Activated CD4-positive, alpha-beta memory T cell treated with anti-CD3 and anti-CD28 coated beads for 36 hours (primary cell): ENCODE measurements at regions of chr2 and their contacts with region 1.

Region 1: GRCh38 chr2:9753276-9753600 is 90.0 kb upstream of the TAF1B start:
- DNase-seq: peak; percentile 90
- H3K4me3 Mint-ChIP-seq: peak overlapping the region; percentile 68
- H3K27ac Mint-ChIP-seq: peak overlapping the region; percentile 91
- H3K4me1 Mint-ChIP-seq: peaks cover 70% of the 10 kb centered on the region
- H3K27me3 Mint-ChIP-seq: no peaks in the 10 kb centered on the region

Region 2: DNA sequence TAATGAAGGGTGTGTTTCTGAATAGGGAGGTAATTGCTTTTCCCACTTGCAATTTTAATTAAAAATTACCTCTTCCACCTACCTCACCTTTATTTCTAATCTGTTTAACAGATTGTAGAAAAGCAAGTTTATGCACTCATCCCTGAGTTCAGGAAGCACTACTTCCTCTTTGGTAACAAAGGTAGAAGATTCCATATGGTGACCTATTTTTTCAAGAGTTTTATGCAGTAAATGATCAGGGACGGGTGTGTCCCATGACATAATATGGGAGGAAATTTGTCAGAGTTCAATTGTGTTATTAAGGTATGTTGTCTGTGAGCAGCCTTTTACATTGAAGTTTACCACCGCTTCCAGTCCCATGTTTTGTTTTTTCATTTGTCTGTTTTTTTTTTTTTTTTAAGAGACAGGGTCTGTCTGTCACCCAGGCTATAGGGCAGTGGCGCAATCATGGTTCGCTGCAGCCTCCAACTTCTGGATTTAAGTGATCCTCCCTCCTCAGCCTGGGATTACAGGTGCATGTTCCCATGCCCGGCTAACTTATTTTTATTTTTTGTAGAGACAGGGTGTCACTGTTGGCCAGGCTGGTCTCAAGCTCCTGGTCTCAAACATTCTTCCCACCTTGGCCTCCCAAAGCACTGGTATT is 478.4 kb before region 1 on chr2:
- CTCF ChIA-PET with region 1: no interaction called
- POLR2A ChIA-PET with region 1: no interaction called
- intact Hi-C with region 1: no loop called
- DNase-seq: no peak
- H3K4me3 Mint-ChIP-seq: no peak overlapping the region
- H3K27ac Mint-ChIP-seq: no peak overlapping the region
- H3K4me1 Mint-ChIP-seq: no peaks in the 10 kb centered on the region
- H3K27me3 Mint-ChIP-seq: peaks cover 14% of the 10 kb centered on the region

Region 3: GRCh38 chr2:9423100-9423921 is 329.9 kb before region 1 on chr2 and contains the starts of genes CPSF3 and ITGB1BP1:
- CTCF ChIA-PET with region 1: no interaction called
- POLR2A ChIA-PET with region 1: no interaction called
- intact Hi-C with region 1: loop called (anchors 10 kb)
- DNase-seq: peak; percentile 98
- H3K4me3 Mint-ChIP-seq: peak within 1 kb of the TSS; percentile 87
- H3K27ac Mint-ChIP-seq: peak within 1 kb of the TSS; percentile 88
- H3K4me1 Mint-ChIP-seq: peaks cover 35% of the 10 kb centered on the region
- H3K27me3 Mint-ChIP-seq: no peaks in the 10 kb centered on the region
- total RNA-seq, gene CPSF3: 77.5 to 78.1 TPM
- total RNA-seq, gene ITGB1BP1: 136 to 142 TPM

Region 4: DNA sequence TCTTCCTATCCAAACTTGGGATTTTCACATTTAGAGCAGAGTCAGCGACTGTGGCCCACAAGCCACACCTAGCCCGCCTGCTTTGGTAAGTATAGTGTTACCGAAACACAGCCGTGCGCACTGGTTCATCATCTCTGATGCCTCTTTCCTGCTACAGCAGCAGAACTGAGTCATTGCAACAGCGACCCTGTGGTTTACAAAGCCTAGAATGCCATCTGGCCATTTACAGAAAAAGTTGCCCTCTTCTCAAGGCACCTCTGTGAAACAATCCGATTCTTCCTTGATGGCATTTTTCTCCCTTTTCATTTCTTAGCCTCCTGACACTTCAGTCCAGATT is 289.6 kb before region 1 on chr2:
- CTCF ChIA-PET with region 1: no interaction called
- POLR2A ChIA-PET with region 1: no interaction called
- intact Hi-C with region 1: no loop called
- DNase-seq: peak; percentile 50
- H3K4me3 Mint-ChIP-seq: no peak overlapping the region
- H3K27ac Mint-ChIP-seq: peak overlapping the region; percentile 67
- H3K4me1 Mint-ChIP-seq: peaks cover 11% of the 10 kb centered on the region
- H3K27me3 Mint-ChIP-seq: no peaks in the 10 kb centered on the region

Region 5: GRCh38 chr2:9555297-9556141 is 197.7 kb before region 1 on chr2 and contains the start of gene ADAM17:
- CTCF ChIA-PET with region 1: no interaction called
- POLR2A ChIA-PET with region 1: interaction called, 8 read pairs
- intact Hi-C with region 1: loop called (anchors 1 kb)
- DNase-seq: peak; percentile 93
- H3K4me3 Mint-ChIP-seq: peak within 1 kb of the TSS; percentile 100
- H3K27ac Mint-ChIP-seq: peak within 1 kb of the TSS; percentile 98
- H3K4me1 Mint-ChIP-seq: peaks cover 50% of the 10 kb centered on the region
- H3K27me3 Mint-ChIP-seq: no peaks in the 10 kb centered on the region
- total RNA-seq, gene ADAM17: 24.0 to 24.7 TPM

Region 6: GRCh38 chr2:9656270-9656766 is 96.9 kb before region 1 on chr2:
- CTCF ChIA-PET with region 1: interaction called, 3 read pairs
- POLR2A ChIA-PET with region 1: interaction called, 18 read pairs
- intact Hi-C with region 1: loop called (anchors 1 kb)
- DNase-seq: peak; percentile 90
- H3K4me3 Mint-ChIP-seq: peak overlapping the region; percentile 40
- H3K27ac Mint-ChIP-seq: peak overlapping the region; percentile 94
- H3K4me1 Mint-ChIP-seq: peaks cover 43% of the 10 kb centered on the region
- H3K27me3 Mint-ChIP-seq: peaks cover 9% of the 10 kb centered on the region

Region 7: GRCh38 chr2:9739531-9739964 is 13.7 kb before region 1 on chr2:
- CTCF ChIA-PET with region 1: interaction called, 5 read pairs
- POLR2A ChIA-PET with region 1: interaction called, 12 read pairs
- intact Hi-C with region 1: loop called (anchors 1 kb)
- DNase-seq: peak; percentile 77
- H3K4me3 Mint-ChIP-seq: peak overlapping the region; percentile 75
- H3K27ac Mint-ChIP-seq: peak overlapping the region; percentile 89
- H3K4me1 Mint-ChIP-seq: peaks cover 52% of the 10 kb centered on the region
- H3K27me3 Mint-ChIP-seq: no peaks in the 10 kb centered on the region

Region 8: GRCh38 chr2:9778012-9778411 is 24.8 kb after region 1 on chr2:
- CTCF ChIA-PET with region 1: interaction called, 5 read pairs
- POLR2A ChIA-PET with region 1: interaction called, 23 read pairs
- intact Hi-C with region 1: loop called (anchors 1 kb)
- DNase-seq: peak; percentile 55
- H3K4me3 Mint-ChIP-seq: no peak overlapping the region
- H3K27ac Mint-ChIP-seq: peak overlapping the region; percentile 38
- H3K4me1 Mint-ChIP-seq: peaks cover 47% of the 10 kb centered on the region
- H3K27me3 Mint-ChIP-seq: no peaks in the 10 kb centered on the region

Region 9: GRCh38 chr2:9813312-9814133 is 60.3 kb after region 1 on chr2:
- CTCF ChIA-PET with region 1: no interaction called
- POLR2A ChIA-PET with region 1: no interaction called
- intact Hi-C with region 1: no loop called
- DNase-seq: peak; percentile 80
- H3K4me3 Mint-ChIP-seq: no peak overlapping the region
- H3K27ac Mint-ChIP-seq: no peak overlapping the region
- H3K4me1 Mint-ChIP-seq: peaks cover 14% of the 10 kb centered on the region
- H3K27me3 Mint-ChIP-seq: peaks cover 5% of the 10 kb centered on the region